ENCODE measurements at regions of chr15 and their contacts with region 1.

Region 1: GRCh38 chr15:65032801-65033537 is 3.5 kb upstream of the MTFMT start:
- DNase-seq: peak; percentile 51 to 81 (median 77)
- ATAC-seq: peak; percentile 72 to 76
- H3K4me3 ChIP-seq: no peak overlapping the region
- H3K27ac ChIP-seq: no peak overlapping the region
- H3K4me1 ChIP-seq: peaks cover 5% of the 10 kb centered on the region
- H3K27me3 ChIP-seq: no peaks in the 10 kb centered on the region

Region 2: DNA sequence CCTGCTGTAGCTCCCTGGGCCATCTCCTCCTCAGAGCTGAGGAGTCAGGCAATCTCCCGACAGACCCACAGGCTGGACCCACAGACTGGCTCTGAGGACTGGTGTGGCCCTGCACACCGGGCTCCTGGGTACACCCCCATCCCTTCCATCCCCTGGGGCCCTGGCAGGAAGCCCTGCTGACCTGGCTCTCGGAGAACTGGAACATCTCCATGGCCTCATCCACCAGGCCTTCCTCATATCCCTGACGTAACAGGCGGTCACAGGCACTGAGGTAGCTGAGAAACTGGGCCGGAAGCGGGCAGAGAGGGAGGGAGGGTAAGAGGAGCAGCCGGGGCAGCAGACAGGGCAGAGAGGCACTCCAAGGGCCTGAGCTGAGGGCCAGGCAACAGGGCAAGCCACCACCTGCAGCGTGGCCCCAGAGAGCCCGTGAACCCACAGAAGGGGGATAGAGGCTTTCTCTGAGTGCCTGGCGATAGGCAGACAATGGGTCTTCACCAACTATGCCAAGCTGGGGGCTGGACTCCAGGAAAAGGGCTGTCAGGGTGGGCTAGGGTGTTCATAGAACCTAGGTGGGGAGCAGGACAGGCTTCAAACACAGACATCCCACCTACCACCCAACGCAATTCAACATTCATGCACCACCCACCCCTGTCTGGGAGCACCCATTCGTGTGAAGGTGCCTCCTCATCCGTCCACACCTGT is 61.5 kb after region 1 on chr15:
- intact Hi-C with region 1: loop called in 1 of 4 experiments (anchors 10 kb)
- DNase-seq: peak in 2 of 3 donors; percentile 43 to 48
- ATAC-seq: peak; percentile 24 to 57
- H3K4me3 ChIP-seq: no peak overlapping the region
- H3K27ac ChIP-seq: no peak overlapping the region
- H3K4me1 ChIP-seq: peaks cover 15% of the 10 kb centered on the region
- H3K27me3 ChIP-seq: no peaks in the 10 kb centered on the region

Region 3: DNA sequence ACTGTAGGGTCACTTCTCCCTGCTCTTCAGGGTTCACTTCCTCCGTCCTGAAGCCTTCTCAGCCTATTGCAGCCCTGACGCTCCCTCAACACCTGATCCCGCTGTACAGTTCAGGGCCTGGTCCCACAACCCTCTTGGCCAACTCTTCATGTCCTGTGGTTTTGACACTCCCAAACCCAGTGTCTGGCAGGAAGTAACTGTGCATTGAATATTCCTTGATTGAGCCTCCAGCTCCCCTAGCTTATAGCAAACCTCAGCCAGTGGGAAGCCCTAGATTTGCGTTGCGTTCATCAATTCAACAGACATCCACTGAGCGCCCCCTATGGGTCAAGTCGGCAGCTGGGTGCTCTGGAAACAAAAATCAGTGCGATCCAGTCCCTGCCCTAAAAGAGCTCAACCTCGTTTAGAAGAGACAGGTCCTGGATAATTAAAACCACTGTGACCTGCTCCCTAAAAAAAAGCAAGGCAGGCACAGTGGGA is 68.5 kb after region 1 on chr15:
- intact Hi-C with region 1: loop called in 3 of 4 experiments (anchors 5 to 10 kb)
- DNase-seq: peak; percentile 80 to 92 (median 87)
- ATAC-seq: peak; percentile 49 to 53
- H3K4me3 ChIP-seq: no peak overlapping the region
- H3K27ac ChIP-seq: no peak overlapping the region
- H3K4me1 ChIP-seq: no peaks in the 10 kb centered on the region
- H3K27me3 ChIP-seq: no peaks in the 10 kb centered on the region

Measured in right cardiac atrium (tissue), 5 donors.